Caco-2 (cell line): ENCODE measurements at regions of chr3 and their contacts with region 1.

Region 1: GRCh38 chr3:197354319-197355001 is 56.0 kb upstream of the DLG1 start:
- DNase-seq: no peak
- H3K4me3 ChIP-seq: no peak overlapping the region
- H3K4me3 Mint-ChIP-seq: peak overlapping the region; percentile 60
- H3K27ac Mint-ChIP-seq: peak overlapping the region; percentile 90
- H3K4me1 ChIP-seq: peaks cover 50% of the 10 kb centered on the region
- H3K4me1 Mint-ChIP-seq: peaks cover 29% of the 10 kb centered on the region
- H3K27me3 ChIP-seq: no peaks in the 10 kb centered on the region
- H3K27me3 Mint-ChIP-seq: no peaks in the 10 kb centered on the region
- CTCF ChIP-seq: no peak

Region 2: GRCh38 chr3:197317250-197317963 is 37.1 kb before region 1 on chr3:
- CTCF ChIA-PET with region 1: no interaction called
- POLR2A ChIA-PET with region 1: no interaction called
- intact Hi-C with region 1: no loop called
- DNase-seq: peak in 1 of 2 experiments; percentile 27
- H3K4me3 ChIP-seq: no peak overlapping the region
- H3K4me3 Mint-ChIP-seq: no peak overlapping the region
- H3K27ac Mint-ChIP-seq: no peak overlapping the region
- H3K4me1 ChIP-seq: peaks cover 14% of the 10 kb centered on the region
- H3K4me1 Mint-ChIP-seq: peaks cover 30% of the 10 kb centered on the region
- H3K27me3 ChIP-seq: no peaks in the 10 kb centered on the region
- H3K27me3 Mint-ChIP-seq: no peaks in the 10 kb centered on the region
- CTCF ChIP-seq: no peak

Region 3: DNA sequence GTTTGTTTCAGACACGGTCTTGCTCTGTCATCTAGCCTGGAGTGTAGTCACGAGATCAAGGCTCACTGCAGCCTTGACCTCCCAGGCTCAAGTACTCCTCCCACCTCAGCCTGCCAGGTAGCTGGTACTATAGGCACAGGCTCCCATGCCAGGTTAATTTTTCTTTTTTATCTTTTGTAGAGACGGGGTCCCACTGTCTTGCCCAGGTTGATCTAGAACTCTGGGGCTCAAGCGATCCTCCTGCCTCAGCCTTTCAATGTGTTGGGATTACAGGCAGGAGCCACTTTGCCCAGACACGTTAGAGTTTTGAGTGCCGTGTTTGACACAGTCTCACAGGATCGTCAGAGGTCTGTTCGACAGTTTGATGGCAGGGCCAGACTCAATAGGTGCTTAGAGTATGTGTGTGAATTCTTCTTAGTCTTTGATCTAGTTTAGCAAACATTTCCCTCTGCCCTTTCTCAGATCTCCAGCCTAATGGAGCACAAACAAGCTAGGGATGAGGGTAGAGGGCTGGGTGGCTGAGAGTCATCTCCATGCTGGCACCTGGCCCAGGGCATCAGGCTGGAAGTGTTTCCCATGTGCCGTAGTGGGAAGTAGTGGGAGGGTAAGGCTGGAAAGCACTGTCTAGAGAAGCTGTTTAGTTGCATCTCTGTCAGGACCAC is 10.1 kb after region 1 on chr3:
- CTCF ChIA-PET with region 1: interaction called, 3 read pairs
- POLR2A ChIA-PET with region 1: no interaction called
- intact Hi-C with region 1: loop called (anchors 1 kb)
- DNase-seq: peak in 1 of 2 experiments; percentile 24
- H3K4me3 ChIP-seq: no peak overlapping the region
- H3K4me3 Mint-ChIP-seq: no peak overlapping the region
- H3K27ac Mint-ChIP-seq: peak overlapping the region; percentile 70
- H3K4me1 ChIP-seq: peaks cover 54% of the 10 kb centered on the region
- H3K4me1 Mint-ChIP-seq: peaks cover 60% of the 10 kb centered on the region
- H3K27me3 ChIP-seq: no peaks in the 10 kb centered on the region
- H3K27me3 Mint-ChIP-seq: no peaks in the 10 kb centered on the region
- CTCF ChIP-seq: no peak

Region 4: DNA sequence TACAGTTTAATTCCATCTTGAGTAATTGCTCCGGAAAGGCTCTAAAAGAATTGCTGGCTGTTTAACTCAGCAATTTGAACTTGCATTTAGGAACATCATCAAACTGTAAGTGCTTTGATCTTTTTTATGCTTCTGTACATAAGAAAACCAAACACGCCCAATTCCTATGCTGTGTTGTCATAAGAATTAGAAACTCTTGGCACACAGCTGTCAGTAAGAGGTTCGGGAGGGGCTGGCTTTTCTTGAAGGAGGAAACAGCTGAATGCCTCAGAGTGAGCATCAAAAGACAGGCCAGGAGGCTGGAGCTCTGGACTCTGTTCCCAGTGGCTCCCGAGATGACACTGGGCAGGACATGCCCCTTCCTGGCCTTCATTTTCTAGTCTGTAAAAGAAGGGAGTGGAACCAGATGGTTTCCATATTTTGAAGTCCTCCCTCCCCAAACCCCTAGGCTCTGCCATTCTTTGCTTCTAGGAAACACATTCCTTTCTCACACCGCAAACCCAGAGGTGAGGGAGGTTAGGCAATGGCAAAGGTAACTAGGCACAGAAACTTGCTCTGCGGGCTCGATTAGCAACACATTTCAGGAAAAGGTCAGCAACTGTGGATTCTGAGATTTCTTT is 17.7 kb after region 1 on chr3:
- CTCF ChIA-PET with region 1: interaction called, 14 read pairs
- POLR2A ChIA-PET with region 1: interaction called, 7 read pairs
- intact Hi-C with region 1: loop called (anchors 1 kb)
- DNase-seq: peak; percentile 90 to 93
- H3K4me3 ChIP-seq: no peak overlapping the region
- H3K4me3 Mint-ChIP-seq: peak overlapping the region; percentile 7
- H3K27ac Mint-ChIP-seq: peak overlapping the region; percentile 90
- H3K4me1 ChIP-seq: peaks cover 57% of the 10 kb centered on the region
- H3K4me1 Mint-ChIP-seq: peaks cover 32% of the 10 kb centered on the region
- H3K27me3 ChIP-seq: no peaks in the 10 kb centered on the region
- H3K27me3 Mint-ChIP-seq: no peaks in the 10 kb centered on the region
- CTCF ChIP-seq: no peak

Region 5: DNA sequence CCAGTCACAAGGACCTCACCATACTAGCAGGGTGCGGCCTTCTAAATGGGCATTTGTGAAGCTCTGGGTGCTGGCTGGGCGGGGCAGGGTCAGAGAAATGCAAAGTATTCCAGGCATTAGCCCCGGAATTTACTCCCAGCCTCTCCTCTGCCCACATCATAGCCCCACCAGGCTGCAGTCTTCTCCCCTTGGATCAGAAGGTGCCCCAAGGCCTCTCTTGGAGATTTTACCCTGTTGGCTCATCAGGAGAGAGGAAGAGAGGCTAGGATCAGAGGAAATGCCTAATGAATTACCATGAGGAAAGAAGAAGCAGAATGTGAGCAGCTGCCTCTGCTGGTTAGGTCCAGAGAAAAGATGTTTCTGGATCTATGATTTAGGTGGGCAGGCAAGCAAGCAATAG is 135.6 kb after region 1 on chr3:
- CTCF ChIA-PET with region 1: no interaction called
- POLR2A ChIA-PET with region 1: no interaction called
- intact Hi-C with region 1: loop called (anchors 5 kb)
- DNase-seq: peak; percentile 80 to 93
- H3K4me3 ChIP-seq: no peak overlapping the region
- H3K4me3 Mint-ChIP-seq: peak overlapping the region; percentile 44
- H3K27ac Mint-ChIP-seq: peak overlapping the region; percentile 97
- H3K4me1 ChIP-seq: peaks cover 37% of the 10 kb centered on the region
- H3K4me1 Mint-ChIP-seq: peaks cover 21% of the 10 kb centered on the region
- H3K27me3 ChIP-seq: no peaks in the 10 kb centered on the region
- H3K27me3 Mint-ChIP-seq: no peaks in the 10 kb centered on the region
- CTCF ChIP-seq: no peak